ENCODE measurements at regions of chr14 and their contacts with region 1.

Region 1: DNA sequence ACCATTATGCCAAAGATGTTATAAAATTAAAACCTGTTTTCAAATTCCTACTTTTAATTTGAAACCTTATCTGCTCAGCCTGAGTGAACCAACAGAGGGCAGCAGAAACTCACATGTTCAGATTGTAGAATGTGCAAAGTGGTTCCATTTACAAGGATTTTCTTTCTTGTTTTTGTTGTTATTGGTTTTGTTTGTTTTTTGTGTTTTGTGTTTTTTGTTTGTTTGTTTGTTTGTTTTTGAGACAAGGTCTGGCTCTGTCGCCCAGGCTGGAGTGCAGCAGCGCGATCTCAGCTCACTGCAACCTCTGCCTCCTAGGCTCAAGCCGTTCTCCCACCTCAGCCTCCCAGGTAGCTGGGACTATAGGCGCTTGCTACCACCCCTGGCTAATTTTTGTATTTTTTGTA is 22.8 kb upstream of the GARIN2 start:
- DNase-seq: no peak
- ATAC-seq: peak; percentile 55 to 67 (median 62)
- H3K4me3 ChIP-seq: no peak overlapping the region
- H3K27ac ChIP-seq: no peak overlapping the region
- H3K4me1 ChIP-seq: no peaks in the 10 kb centered on the region
- H3K27me3 ChIP-seq: no peaks in the 10 kb centered on the region
- CTCF ChIP-seq: peak; percentile 61 to 80 (median 72)
- POLR2A ChIP-seq: no peak

Region 2: GRCh38 chr14:67285876-67286452 is 119.5 kb after region 1 on chr14:
- intact Hi-C with region 1: loop called in 1 of 2 experiments (anchors 10 kb)
- DNase-seq: no peak
- ATAC-seq: peak in 3 of 4 donors; percentile 48 to 53 (median 53)
- H3K4me3 ChIP-seq: no peak overlapping the region
- H3K27ac ChIP-seq: no peak overlapping the region
- H3K4me1 ChIP-seq: no peaks in the 10 kb centered on the region
- H3K27me3 ChIP-seq: no peaks in the 10 kb centered on the region
- CTCF ChIP-seq: peak; percentile 48 to 69 (median 64)
- POLR2A ChIP-seq: no peak

Region 3: GRCh38 chr14:67426983-67427606 is 260.6 kb after region 1 on chr14:
- intact Hi-C with region 1: no loop called
- DNase-seq: peak; percentile 68 to 73 (median 69)
- ATAC-seq: peak; percentile 91 to 95 (median 93)
- H3K4me3 ChIP-seq: no peak overlapping the region
- H3K27ac ChIP-seq: no peak overlapping the region
- H3K4me1 ChIP-seq: no peaks in the 10 kb centered on the region
- H3K27me3 ChIP-seq: no peaks in the 10 kb centered on the region
- CTCF ChIP-seq: peak; percentile 72 to 78 (median 74)
- POLR2A ChIP-seq: no peak